WTC11 (cell line): ENCODE measurements at regions of chr1 and their contacts with region 1.

Region 1: GRCh38 chr1:206030714-206031113 is 7.0 kb upstream of the CTSE start:
- DNase-seq: peak; percentile 76
- ATAC-seq: peak; percentile 99
- H3K4me3 Mint-ChIP-seq: no peak overlapping the region
- H3K27ac Mint-ChIP-seq: no peak overlapping the region
- H3K4me1 Mint-ChIP-seq: peaks cover 6% of the 10 kb centered on the region
- H3K27me3 Mint-ChIP-seq: no peaks in the 10 kb centered on the region
- CTCF ChIP-seq: peak; percentile 33; the same call in 1 of the 2 replicates

Region 2: DNA sequence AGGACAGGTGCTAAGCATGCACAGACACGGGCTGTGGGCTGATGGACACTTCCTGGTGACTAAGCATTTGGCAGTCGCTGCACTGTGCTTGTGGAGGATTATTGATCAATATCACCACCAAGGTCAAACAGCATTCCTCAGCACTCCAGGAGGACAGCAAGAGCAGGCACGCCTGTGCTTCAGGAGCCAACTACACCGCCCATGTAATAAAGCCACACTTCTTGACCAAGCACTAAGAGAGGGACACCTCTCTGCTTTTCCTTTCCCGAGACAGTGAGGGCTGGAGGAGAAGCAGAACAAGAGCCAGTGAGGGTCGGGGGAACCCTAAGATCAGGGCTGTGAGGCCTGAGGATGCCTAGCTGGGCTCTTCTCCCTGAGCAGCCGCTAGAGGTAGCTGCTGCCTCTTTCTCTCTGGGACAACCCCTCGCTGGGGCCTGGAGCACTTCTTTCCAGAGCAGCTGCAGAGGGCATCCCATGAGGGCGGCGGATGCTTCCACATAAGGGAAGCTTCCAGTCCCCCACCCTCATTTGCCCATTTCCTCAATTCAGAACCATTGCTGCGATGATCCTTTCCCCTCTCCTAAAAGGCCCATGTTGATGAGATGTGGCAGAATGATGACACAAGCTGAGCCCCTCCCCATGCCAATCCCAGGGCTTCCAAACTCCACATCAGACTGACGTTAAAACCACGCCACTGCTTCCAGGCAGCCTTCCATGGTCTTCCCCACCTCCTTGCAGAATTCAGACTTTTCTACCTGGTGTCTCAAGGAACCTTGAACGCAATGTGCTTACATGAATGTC is 46.6 kb before region 1 on chr1:
- CTCF ChIA-PET with region 1: interaction called, 15 read pairs
- POLR2A ChIA-PET with region 1: no interaction called
- DNase-seq: peak; percentile 77
- ATAC-seq: peak; percentile 93
- H3K4me3 Mint-ChIP-seq: no peak overlapping the region
- H3K27ac Mint-ChIP-seq: no peak overlapping the region
- H3K4me1 Mint-ChIP-seq: 0 out of 2 replicates have a peak, but pooled peaks cover 4% of the 10 kb centered on the region
- H3K27me3 Mint-ChIP-seq: no peaks in the 10 kb centered on the region; the same call in 1 of the 2 replicates
- CTCF ChIP-seq: peak; percentile 26; the same call in 1 of the 2 replicates

Region 3: GRCh38 chr1:206050655-206051235 is 20.0 kb after region 1 on chr1:
- CTCF ChIA-PET with region 1: interaction called, 10 read pairs
- POLR2A ChIA-PET with region 1: no interaction called
- DNase-seq: no peak
- ATAC-seq: no peak
- H3K4me3 Mint-ChIP-seq: no peak overlapping the region
- H3K27ac Mint-ChIP-seq: no peak overlapping the region
- H3K4me1 Mint-ChIP-seq: peaks cover 13% of the 10 kb centered on the region
- H3K27me3 Mint-ChIP-seq: no peaks in the 10 kb centered on the region; the same call in 1 of the 2 replicates
- CTCF ChIP-seq: no peak

Region 4: GRCh38 chr1:206060844-206061243 is 30.1 kb after region 1 on chr1:
- CTCF ChIA-PET with region 1: no interaction called
- POLR2A ChIA-PET with region 1: no interaction called
- DNase-seq: no peak
- ATAC-seq: no peak
- H3K4me3 Mint-ChIP-seq: no peak overlapping the region
- H3K27ac Mint-ChIP-seq: no peak overlapping the region
- H3K4me1 Mint-ChIP-seq: no peaks in the 10 kb centered on the region
- H3K27me3 Mint-ChIP-seq: peaks cover 4% of the 10 kb centered on the region
- CTCF ChIP-seq: no peak

Region 5: GRCh38 chr1:206094024-206094423 is 63.3 kb after region 1 on chr1:
- CTCF ChIA-PET with region 1: interaction called, 12 read pairs
- POLR2A ChIA-PET with region 1: no interaction called
- DNase-seq: no peak
- ATAC-seq: no peak
- H3K4me3 Mint-ChIP-seq: no peak overlapping the region
- H3K27ac Mint-ChIP-seq: no peak overlapping the region
- H3K4me1 Mint-ChIP-seq: no peaks in the 10 kb centered on the region
- H3K27me3 Mint-ChIP-seq: no peaks in the 10 kb centered on the region
- CTCF ChIP-seq: no peak

Region 6: DNA sequence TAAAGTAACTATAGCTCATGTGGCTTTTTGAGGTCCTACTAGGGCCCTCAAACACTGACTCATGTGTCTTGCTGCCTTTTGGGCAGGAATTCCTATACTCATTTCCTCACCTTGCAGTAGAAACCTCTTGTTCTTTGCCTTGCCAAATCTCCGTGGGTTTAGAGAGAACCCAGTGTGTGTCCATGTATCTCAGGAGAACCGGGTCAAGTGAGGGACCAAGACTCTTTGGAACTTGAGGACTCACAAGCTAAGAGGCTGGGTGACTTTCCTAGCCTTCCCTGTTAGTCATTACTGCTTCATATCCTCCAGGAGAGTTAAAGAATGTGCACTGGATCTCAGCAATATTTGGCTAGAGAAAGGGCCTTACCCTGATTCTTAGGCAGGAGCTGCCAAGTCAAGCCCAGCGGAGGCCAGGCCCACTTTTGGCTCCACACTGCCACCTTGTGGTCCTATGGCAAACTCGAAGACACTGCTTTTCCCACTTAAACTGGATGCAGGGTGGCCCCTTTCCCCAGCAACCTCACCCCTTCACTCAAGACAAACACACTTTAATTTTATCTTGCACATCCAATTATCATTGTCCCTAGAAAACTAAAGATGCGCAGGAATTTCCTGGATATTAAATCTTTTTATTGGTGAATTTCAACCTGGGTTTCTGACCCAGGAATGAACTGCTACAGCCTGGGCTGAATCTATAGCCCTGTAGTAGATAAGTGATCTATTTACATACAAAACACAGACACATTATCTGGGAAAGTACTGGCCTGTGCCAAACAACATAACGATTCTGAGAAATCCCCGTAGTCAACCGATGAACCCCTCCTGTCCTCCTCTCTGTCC is 75.8 kb after region 1 on chr1:
- CTCF ChIA-PET with region 1: interaction called, 79 read pairs
- POLR2A ChIA-PET with region 1: interaction called, 3 read pairs
- DNase-seq: peak; percentile 86
- ATAC-seq: peak; percentile 95
- H3K4me3 Mint-ChIP-seq: no peak overlapping the region
- H3K27ac Mint-ChIP-seq: no peak overlapping the region
- H3K4me1 Mint-ChIP-seq: no peaks in the 10 kb centered on the region
- H3K27me3 Mint-ChIP-seq: no peaks in the 10 kb centered on the region
- CTCF ChIP-seq: peak; percentile 78